AG04449 (cell line): ENCODE measurements at regions of chr1 and their contacts with region 1.

Region 1: DNA sequence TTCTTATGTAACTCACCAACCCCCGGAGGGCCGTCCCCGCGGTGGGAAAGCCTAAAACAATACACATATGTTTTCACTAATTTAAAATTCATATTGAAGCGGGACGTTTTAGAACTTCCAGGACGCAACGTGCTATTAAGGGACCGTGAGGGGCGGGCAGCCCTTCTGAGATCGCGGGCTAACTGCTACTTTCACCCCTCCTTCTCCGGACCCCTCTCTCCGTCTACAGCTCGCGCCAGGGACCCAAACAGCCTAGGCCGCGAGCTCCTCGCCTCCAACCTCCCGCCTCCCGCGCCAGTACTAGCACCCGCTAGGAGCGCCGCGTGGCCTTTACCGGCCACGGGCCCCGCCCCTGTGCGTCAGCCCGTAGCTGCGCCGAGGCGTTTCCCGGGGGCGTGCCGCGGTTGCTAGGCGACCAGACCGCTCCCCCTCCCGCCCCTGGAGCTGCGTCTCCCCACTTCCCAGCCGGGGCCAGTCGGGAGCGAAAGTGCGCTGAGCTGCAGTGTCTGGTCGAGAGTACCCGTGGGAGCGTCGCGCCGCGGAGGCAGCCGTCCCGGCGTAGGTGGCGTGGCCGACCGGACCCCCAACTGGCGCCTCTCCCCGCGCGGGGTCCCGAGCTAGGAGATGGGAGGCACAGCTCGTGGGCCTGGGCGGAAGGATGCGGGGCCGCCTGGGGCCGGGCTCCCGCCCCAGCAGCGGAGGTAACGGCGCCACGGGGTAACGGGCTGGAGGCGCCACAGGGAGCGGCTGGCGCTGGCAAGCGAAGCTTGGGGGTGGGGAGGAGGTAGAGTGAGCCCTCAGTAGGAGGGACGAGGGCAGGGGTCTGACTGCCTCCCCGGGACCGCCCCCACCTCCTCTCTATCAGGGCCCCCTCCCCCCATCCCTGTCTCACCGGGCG is at the start of gene DYRK3:
- DNase-seq: no peak
- H3K4me3 ChIP-seq: peak within 1 kb of the TSS; percentile 86
- CTCF ChIP-seq: no peak

Region 2: DNA sequence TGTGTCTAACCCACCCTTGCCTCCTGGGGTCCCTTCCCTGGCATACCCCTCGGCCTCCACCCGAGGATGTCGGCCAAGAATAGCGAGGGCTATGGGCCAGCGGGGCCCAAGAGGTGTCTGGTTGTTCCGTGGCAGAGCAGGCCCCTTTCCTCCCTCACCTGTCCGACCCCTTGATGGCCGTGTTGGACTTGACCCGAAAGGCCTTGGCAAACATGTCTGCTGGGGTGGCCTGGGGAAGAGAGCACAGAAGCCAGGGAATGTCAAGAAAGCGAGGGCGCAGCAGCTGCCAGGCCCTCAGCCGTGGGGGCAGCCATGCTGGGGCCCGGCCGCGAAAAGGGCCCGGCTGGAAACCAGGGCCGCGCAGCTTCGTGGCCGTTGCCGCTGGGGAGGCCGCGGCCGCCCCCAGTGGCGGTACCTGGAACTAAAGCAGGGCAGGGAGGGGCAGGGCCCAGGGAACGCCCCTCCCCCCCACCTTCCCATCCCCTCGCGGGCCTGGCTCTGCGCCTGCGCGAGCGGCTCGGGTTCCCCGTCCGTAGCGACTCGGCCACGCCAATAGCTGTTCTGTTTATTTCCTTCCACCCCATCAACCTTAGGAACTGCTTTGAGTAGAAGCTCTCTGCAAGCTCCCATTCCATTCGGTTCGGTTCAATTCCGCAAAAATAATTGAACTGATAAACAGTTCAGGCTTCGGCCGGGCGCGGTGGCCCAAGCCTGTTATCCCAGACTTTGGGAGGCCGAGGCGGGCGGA is 23.0 kb before region 1 on chr1 and contains the start of gene EIF2D:
- CTCF ChIA-PET with region 1: interaction called, 234 read pairs
- POLR2A ChIA-PET with region 1: interaction called, 9 read pairs
- DNase-seq: no peak
- H3K4me3 ChIP-seq: peak within 1 kb of the TSS; percentile 95
- CTCF ChIP-seq: peak; percentile 99

Region 3: DNA sequence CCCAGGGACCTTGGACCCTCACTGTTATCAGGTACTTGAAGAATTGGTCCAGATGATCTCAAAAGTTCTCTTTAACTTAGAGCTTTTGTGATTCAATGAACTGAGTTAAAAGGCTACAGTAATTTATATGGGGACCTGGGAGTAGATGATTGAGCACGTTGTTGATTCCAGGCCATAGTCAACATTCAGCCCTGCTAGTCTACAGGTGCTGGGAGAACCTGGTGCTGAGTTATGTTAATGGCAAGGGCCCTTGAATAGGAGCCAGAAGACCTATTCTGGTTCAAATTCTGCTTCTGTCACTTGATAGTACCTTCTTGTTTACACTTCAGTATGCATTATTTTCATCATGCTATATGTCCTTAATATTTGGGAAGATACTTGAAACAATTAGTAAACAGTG is 11.2 kb after region 1 on chr1:
- CTCF ChIA-PET with region 1: interaction called, 1,486 read pairs
- POLR2A ChIA-PET with region 1: interaction called, 8 read pairs
- DNase-seq: no peak
- H3K4me3 ChIP-seq: no peak overlapping the region
- CTCF ChIP-seq: no peak